Activated CD8-positive, alpha-beta memory T cell treated with anti-CD3 and anti-CD28 coated beads, Interleukin-2, amount 10 ng/mL, durations not matched to agents 7 days and 5 days (primary cell): ENCODE measurements at regions of chr3 and their contacts with region 1.

Region 1: GRCh38 chr3:112642912-112643506 is 2.1 kb upstream of the CCDC80 start:
- DNase-seq: peak; percentile 95
- ATAC-seq: peak; percentile 99
- H3K4me3 Mint-ChIP-seq: peak overlapping the region; percentile 42
- H3K27ac Mint-ChIP-seq: peak overlapping the region; percentile 88
- H3K4me1 Mint-ChIP-seq: peaks cover 38% of the 10 kb centered on the region
- H3K27me3 Mint-ChIP-seq: no peaks in the 10 kb centered on the region

Region 2: GRCh38 chr3:112519424-112520001 is 123.5 kb before region 1 on chr3:
- CTCF ChIA-PET with region 1: no interaction called
- DNase-seq: no peak
- ATAC-seq: peak; percentile 75
- H3K4me3 Mint-ChIP-seq: no peak overlapping the region
- H3K27ac Mint-ChIP-seq: no peak overlapping the region
- H3K4me1 Mint-ChIP-seq: peaks cover 19% of the 10 kb centered on the region
- H3K27me3 Mint-ChIP-seq: no peaks in the 10 kb centered on the region

Region 3: DNA sequence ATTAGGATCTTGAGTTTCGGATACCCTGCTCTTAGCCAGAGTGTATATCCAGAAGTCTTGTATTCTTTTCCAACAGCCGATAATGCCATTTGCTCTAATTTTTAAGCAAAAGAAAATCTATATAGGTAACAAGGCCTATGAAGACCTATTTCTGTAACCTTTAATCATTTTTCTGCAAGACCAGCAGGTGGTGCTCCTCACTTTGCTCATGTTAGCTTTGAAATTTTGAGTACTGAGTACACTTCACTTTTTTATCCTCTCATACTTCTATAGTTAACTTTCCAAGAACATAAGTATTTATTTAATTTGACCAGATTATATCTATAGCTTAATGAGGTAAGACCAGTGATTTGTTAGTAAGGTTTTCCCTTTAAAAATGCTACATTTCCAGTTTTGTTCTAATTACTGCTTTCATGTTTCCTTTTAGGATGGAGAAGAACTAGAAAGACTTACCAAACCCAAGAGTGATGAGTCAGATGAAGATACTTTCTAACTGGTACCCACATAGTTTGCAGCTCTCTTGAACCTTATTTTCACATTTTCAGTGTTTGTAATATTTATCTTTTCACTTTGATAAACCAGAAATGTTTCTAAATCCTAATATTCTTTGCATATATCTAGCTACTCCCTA is 60.6 kb before region 1 on chr3:
- CTCF ChIA-PET with region 1: interaction called, 32 read pairs
- DNase-seq: peak; percentile 64
- ATAC-seq: peak; percentile 78
- H3K4me3 Mint-ChIP-seq: no peak overlapping the region
- H3K27ac Mint-ChIP-seq: peak overlapping the region; percentile 22
- H3K4me1 Mint-ChIP-seq: peaks cover 13% of the 10 kb centered on the region
- H3K27me3 Mint-ChIP-seq: no peaks in the 10 kb centered on the region

Region 4: GRCh38 chr3:112681822-112682325 is 38.9 kb after region 1 on chr3:
- CTCF ChIA-PET with region 1: interaction called, 19 read pairs
- DNase-seq: no peak
- ATAC-seq: no peak
- H3K4me3 Mint-ChIP-seq: no peak overlapping the region
- H3K27ac Mint-ChIP-seq: no peak overlapping the region
- H3K4me1 Mint-ChIP-seq: peaks cover 22% of the 10 kb centered on the region
- H3K27me3 Mint-ChIP-seq: peaks cover 9% of the 10 kb centered on the region

Region 5: DNA sequence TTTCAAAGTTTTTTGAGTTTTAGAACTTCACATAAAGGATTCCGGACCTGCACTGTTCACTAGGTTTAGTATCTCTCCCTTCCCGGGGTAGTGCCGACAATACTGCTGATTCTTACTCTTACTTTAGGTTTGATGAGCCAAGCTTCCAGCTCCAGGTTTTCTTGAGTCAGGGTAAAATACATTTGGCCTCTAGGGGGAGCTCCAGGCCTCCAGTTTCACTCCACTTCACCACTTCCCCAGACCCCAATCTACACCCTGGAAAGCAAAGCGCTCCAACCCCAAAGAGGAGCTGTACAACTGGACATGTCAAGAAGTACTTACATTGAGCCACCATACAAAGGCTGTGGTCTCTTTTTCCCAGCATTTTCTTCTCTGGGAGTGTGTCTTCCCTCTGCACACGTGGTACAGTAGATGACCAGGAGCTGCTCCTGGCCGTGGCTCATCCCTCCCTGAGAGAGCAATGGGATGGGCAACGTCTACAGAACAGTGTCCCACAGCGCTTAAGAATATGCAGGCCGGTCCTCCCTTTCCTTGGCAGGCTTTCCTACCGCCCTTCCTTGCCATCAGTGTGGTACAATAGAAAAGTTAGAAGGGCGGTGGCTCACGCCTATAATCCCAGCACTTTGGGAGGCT is 91.8 kb after region 1 on chr3:
- CTCF ChIA-PET with region 1: interaction called, 131 read pairs
- DNase-seq: peak; percentile 79
- ATAC-seq: peak; percentile 64
- H3K4me3 Mint-ChIP-seq: no peak overlapping the region
- H3K27ac Mint-ChIP-seq: peak overlapping the region; percentile 2
- H3K4me1 Mint-ChIP-seq: peaks cover 38% of the 10 kb centered on the region
- H3K27me3 Mint-ChIP-seq: no peaks in the 10 kb centered on the region

Region 6: DNA sequence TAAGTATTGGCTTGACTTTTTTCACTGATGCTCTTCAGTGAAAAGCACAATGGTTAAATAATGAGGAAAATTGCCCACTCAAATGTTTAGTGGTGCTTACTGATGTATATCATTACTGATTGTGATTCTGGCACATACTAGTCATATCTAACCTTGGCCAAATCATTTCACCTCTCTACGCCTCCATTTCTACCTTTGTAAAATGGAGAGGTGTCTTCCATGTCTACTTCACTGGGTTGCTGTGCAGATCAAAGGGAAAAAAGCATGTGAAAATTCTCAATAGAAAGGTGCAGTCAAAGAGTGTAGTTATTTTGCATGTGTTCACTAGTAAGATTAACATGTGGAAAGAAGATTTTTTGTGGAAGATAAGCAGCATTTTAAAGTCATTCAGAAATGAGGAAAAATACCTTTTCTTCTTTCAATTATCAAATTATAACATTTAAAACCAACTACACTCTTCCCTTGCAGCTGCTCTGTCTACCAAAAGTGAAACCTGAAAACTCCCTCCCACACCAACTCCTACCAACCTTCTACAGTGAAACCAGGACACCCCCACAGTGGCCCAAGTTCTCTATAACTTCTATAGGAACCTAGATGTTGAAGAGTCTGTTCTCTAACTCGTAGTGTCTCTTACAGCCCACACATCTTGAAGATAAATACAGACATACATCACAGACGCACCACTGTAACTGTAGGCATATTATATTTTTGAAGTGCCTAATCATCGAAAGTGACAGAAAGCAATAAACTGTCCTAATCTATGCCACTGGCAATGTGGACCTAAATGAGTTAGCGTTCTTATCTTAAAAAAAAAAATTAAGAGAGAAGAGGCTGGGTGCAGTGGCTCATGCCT is 330.5 kb after region 1 on chr3:
- CTCF ChIA-PET with region 1: interaction called, 48 read pairs
- DNase-seq: peak; percentile 66
- ATAC-seq: peak; percentile 78
- H3K4me3 Mint-ChIP-seq: peak overlapping the region; percentile 87
- H3K27ac Mint-ChIP-seq: peak overlapping the region; percentile 90
- H3K4me1 Mint-ChIP-seq: peaks cover 70% of the 10 kb centered on the region
- H3K27me3 Mint-ChIP-seq: no peaks in the 10 kb centered on the region

Region 7: DNA sequence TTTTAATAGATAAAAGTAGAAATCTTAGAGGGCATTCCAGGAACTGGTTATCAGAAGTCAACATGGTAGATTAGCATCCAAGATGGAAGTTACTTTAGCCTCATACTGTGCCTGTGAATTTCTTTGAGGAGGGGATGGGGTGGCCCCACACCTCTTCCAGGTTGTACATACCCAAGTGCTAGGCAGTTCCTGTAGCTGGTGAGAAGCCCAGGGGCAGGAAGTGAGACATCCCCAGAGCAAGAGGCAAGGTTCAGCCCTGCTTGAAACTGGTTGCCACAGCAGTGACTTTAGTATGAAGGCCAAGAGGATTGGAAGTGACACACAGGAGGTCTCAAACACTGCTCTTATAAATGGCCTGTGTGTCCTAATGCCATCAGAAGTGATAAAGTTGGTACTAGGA is 359.7 kb after region 1 on chr3:
- CTCF ChIA-PET with region 1: interaction called, 11 read pairs
- DNase-seq: peak; percentile 76
- ATAC-seq: peak; percentile 84
- H3K4me3 Mint-ChIP-seq: no peak overlapping the region
- H3K27ac Mint-ChIP-seq: peak overlapping the region; percentile 79
- H3K4me1 Mint-ChIP-seq: peaks cover 64% of the 10 kb centered on the region
- H3K27me3 Mint-ChIP-seq: no peaks in the 10 kb centered on the region